OCI-LY7 (cell line): ENCODE measurements at regions of chr5 and their contacts with region 1.

Region 1: DNA sequence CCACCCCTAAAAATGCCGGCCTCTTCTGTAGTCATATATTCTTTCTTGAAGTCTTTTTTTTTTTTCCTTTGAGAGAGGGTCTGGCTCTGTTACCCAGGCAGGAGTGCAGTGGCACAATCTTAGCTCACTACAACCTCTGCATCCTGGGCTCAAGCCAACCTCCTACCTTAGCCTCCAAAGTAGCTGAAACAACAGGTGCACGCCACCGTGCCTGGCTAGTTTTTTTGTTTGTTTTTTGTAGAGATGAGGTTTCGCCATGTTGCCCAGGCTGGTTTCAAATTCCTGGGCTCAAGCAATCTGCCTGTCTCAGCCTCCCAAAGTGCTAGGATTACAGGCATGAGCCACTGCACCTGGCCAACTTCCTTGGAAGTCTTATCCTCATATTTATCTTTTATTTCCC is 19.1 kb downstream of the SREK1IP1 start:
- DNase-seq: no peak
- H3K4me3 ChIP-seq: no peak overlapping the region
- H3K27ac ChIP-seq: no peak overlapping the region
- H3K4me1 ChIP-seq: no peaks in the 10 kb centered on the region
- CTCF ChIP-seq: no peak

Region 2: DNA sequence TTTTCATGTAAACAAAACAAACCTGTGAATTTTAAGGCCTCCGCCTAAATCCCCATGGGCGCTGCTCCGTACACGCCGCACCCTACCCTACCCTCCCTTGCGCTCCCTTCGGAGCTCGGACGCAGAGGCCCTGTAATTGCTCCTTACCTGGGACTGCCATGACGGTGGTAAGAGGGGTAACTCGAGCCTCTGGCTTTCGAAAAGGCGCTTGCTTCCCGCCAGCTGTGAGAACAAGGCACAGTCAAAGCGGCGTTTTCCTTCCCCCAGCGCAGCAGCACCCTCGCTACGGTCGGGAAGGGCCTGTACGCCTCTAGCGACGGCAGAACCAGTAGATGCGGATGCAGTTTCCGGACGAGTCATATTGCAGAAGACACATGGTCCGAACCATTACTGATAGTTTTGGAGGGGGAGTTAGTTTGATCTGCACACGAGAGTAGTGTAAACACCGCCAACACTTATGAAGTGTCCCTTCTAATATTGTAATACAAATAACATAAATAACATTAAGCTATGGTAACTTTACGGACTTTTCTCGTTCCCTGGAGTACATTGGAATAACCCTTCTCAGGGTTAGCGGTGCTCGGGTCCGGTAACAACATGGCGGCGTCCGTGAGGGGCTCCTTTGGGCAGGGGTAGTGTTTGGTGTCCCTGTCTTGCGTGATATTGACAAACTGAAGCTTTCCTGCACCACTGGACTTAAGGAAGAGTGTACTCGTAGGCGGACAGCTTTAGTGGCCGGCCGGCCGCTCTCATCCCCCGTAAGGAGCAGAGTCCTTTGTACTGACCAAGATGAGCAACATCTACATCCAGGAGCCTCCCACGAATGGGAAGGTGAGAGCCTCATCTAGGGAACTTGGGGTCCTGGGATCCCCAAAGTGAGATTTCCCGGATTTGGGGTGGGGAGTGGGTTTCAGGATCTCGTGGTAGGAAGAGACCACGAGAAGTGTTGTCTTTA is 19.2 kb after region 1 on chr5 and contains the starts of genes CWC27 and SREK1IP1:
- CTCF ChIA-PET with region 1: no interaction called
- POLR2A ChIA-PET with region 1: interaction called, 11 read pairs
- intact Hi-C with region 1: no loop called
- DNase-seq: peak; percentile 96
- H3K4me3 ChIP-seq: peak within 1 kb of the TSS; percentile 97
- H3K27ac ChIP-seq: peak within 1 kb of the TSS; percentile 66
- H3K4me1 ChIP-seq: peaks cover 37% of the 10 kb centered on the region
- CTCF ChIP-seq: no peak
- total RNA-seq, gene CWC27: 15.4 and 18.8 TPM in 2 replicates
- total RNA-seq, gene SREK1IP1: 4.8 and 9.6 TPM in 2 replicates